MCF 10A (cell line): ENCODE measurements at regions of chr16 and their contacts with region 1.

Region 1: DNA sequence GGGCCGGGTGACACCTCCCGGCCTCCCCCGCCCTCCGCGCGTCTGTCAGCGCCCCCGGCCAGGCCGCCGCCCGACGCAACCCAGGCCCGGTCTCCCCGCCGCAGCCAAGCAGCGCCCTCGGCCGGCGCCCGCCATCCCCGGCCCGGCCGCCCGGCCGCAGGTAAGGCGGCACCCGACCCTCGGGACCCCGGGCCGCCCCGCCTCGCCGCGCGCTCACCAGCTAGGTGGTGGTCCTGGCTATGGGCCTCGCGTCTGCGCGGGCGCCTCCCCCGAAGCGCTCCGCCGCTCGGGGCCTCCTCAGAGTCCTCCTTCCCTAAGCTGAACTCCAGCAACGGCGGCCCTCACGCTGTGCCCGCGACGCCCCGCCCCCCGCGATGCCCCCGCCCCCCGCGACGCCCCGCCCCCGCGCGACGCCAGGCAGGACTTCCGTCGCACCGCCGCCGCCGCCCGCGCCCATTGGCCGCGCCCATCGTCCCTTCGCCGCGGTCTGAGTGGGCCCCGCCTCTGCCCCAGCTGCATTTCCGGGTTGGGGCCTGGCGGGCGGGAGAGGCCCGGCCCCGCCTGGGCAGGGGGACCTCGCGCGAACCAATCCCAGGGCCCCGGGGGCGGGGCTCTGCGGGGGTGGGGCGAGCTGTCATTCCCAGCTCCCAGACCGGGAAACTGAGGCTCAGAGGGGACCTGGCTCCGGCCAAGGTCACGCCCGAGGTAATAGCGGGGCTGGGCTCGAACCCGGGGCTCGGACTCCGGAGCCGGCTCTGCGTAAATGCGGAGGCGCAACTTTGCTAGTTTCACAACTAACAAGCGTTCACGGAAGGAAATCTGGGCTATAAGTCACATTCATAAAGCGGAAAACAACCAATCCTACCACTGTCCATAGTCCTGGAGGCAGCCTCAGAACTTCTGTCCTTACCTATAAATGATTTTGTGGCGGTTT is 9.0 kb upstream of the KCTD5 start:
- DNase-seq: peak; percentile 94
- H3K4me3 Mint-ChIP-seq: peak overlapping the region; percentile 69
- H3K27ac Mint-ChIP-seq: peak overlapping the region; percentile 74
- H3K4me1 Mint-ChIP-seq: peaks cover 19% of the 10 kb centered on the region
- H3K27me3 Mint-ChIP-seq: no peaks in the 10 kb centered on the region
- CTCF ChIP-seq: no peak

Region 2: GRCh38 chr16:2447920-2448583 is 225.3 kb before region 1 on chr16:
- CTCF ChIA-PET with region 1: no interaction called
- POLR2A ChIA-PET with region 1: no interaction called
- intact Hi-C with region 1: no loop called
- DNase-seq: peak; percentile 80
- H3K4me3 Mint-ChIP-seq: no peak overlapping the region
- H3K27ac Mint-ChIP-seq: no peak overlapping the region
- H3K4me1 Mint-ChIP-seq: peaks cover 6% of the 10 kb centered on the region
- H3K27me3 Mint-ChIP-seq: no peaks in the 10 kb centered on the region
- CTCF ChIP-seq: no peak

Region 3: DNA sequence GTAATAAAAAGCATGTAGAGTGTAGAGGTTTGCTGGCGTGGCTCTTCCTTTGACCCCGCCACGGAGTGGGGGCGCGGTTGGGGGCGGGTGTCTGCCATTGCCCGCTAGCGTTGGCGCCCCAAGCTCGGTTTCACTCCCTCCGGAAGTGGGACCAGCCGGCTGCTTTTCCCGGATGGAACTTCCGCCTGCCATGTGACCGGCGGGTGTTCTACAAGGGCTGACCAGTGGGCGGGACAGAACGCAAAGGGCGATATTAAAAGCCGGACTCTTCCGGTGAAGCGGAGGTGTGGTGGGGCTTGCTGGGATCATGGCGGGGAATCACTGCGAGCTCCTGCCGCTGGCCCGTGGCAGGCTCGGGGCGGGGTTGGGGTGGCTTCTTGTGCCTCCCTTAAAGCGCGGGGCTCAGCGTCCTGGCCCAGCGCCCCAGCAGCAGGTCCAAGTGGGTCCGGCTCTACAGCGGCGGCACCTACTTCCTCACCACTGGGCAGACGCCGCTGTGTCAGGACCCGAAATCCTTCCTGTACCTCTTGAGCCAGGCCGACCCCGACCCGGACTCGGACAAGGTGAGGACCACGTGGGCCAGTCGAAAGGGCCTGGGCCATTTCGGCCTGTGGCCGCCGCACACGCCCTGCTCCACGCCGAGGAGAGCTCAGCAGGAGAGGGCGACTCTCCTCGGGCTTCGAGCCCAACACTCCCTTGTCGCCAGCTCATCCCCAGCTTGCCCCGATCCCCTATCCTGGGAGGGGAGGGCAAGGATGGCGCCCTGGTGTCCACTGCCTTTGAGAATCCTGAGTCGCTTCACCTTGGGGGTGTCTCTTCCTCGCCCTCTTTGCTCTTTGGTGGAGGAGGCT is 69.9 kb before region 1 on chr16:
- CTCF ChIA-PET with region 1: no interaction called
- POLR2A ChIA-PET with region 1: interaction called, 10 read pairs
- intact Hi-C with region 1: no loop called
- DNase-seq: peak; percentile 96
- H3K4me3 Mint-ChIP-seq: peak overlapping the region; percentile 96
- H3K27ac Mint-ChIP-seq: peak overlapping the region; percentile 89
- H3K4me1 Mint-ChIP-seq: no peaks in the 10 kb centered on the region
- H3K27me3 Mint-ChIP-seq: no peaks in the 10 kb centered on the region
- CTCF ChIP-seq: no peak

Region 4: DNA sequence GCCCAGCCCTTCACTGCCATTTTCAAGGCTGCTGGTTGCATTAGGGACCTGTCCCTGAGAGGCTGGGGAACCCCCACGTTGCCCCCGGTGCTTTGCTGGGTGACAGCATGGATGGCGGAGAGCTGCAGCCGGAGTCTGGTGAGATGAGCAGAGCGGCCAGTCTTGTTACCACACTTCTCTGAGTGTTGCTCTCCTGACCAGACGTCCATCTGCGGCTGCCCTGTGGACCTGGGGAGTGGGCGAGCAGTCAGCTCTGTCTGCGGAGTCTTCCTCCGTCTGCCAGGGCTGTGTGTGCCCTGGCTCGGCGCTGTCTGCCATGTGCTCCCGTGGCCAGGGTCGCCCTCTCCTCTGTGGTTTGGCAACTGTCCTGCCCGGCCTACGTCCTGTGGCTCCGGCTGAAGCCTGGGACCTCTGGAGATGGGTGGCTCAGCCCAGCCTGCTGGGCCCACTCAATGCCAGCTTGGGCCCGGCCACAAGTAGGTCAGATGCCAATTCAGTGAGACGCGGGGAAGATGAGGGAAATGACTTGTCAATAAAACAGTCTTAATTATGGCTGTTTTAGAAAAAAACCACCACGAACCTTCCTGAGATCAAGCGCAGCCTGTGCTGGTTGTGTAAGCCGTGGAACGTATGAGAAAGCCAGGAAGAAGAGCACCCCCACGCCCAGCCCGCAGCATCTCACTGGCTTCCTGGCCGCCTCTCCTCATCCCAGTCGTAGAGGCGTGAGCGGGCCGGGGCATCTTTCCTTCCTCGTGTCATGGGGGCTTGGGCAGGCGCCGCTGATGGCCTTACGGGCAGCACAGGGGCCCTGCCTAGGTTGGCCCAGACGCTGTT is 16.9 kb after region 1 on chr16:
- CTCF ChIA-PET with region 1: no interaction called
- POLR2A ChIA-PET with region 1: no interaction called
- intact Hi-C with region 1: no loop called
- DNase-seq: no peak
- H3K4me3 Mint-ChIP-seq: no peak overlapping the region
- H3K27ac Mint-ChIP-seq: no peak overlapping the region
- H3K4me1 Mint-ChIP-seq: peaks cover 4% of the 10 kb centered on the region
- H3K27me3 Mint-ChIP-seq: no peaks in the 10 kb centered on the region
- CTCF ChIP-seq: no peak